Activated T-helper 1 cell treated with anti-CD3 and anti-CD28 coated beads, Interleukin-12 subunit alpha, Interleukin-12 subunit beta, Interleukin-2, Interleukin-4 antibody, amounts not matched to agents 30 ng/mL and 10 ng/mL and 1 ng/mL, durations not matched to agents 14 hours and 24 hours and 36 hours (primary cell): ENCODE measurements at regions of chr2 and their contacts with region 1.

Region 1: GRCh38 chr2:28392297-28393113 is at the start of gene FOSL2:
- DNase-seq: peak; percentile 94
- H3K4me3 Mint-ChIP-seq: peak within 1 kb of the TSS; percentile 87
- H3K27ac Mint-ChIP-seq: peak within 1 kb of the TSS; percentile 99
- H3K4me1 Mint-ChIP-seq: peaks cover 25% of the 10 kb centered on the region
- H3K27me3 Mint-ChIP-seq: no peaks in the 10 kb centered on the region
- total RNA-seq, gene FOSL2: 54.9 and 55.0 TPM in 2 replicates

Region 2: DNA sequence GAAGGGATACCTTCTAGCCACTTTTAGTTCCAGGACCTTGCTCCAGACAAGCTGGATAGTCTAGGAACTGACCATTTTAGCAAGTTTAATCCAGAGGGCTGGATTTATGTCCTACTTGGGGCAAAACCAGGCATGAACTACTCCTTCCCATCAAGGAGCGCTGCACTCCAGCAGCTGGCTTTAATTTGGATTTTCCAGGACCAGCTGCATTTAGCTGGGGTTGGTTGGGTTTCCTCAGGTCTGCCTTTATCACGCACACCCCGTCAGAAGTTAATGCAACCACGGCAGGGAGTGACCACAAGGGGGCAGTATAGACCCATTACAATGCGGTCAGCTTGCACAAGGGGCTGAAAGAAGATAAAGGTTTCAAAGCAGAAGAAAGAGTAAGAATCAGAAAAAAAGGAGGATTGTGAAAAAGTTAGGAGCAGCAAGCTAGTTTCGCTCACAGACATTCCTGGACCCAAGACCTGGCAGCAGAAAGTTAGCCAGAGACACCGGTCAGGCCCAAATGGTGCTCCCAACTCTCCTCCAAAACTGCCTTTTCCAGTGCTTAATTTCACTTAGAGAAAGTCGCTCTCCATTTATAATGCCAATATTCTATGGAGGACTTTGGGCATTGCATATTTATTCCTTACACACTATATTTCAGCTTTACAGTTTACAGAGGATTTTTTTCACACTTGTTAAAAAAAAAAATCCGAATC is 688.7 kb before region 1 on chr2:
- intact Hi-C with region 1: loop called (anchors 1 kb)
- DNase-seq: peak; percentile 74
- H3K4me3 Mint-ChIP-seq: no peak overlapping the region
- H3K27ac Mint-ChIP-seq: no peak overlapping the region
- H3K4me1 Mint-ChIP-seq: peaks cover 15% of the 10 kb centered on the region
- H3K27me3 Mint-ChIP-seq: no peaks in the 10 kb centered on the region

Region 3: DNA sequence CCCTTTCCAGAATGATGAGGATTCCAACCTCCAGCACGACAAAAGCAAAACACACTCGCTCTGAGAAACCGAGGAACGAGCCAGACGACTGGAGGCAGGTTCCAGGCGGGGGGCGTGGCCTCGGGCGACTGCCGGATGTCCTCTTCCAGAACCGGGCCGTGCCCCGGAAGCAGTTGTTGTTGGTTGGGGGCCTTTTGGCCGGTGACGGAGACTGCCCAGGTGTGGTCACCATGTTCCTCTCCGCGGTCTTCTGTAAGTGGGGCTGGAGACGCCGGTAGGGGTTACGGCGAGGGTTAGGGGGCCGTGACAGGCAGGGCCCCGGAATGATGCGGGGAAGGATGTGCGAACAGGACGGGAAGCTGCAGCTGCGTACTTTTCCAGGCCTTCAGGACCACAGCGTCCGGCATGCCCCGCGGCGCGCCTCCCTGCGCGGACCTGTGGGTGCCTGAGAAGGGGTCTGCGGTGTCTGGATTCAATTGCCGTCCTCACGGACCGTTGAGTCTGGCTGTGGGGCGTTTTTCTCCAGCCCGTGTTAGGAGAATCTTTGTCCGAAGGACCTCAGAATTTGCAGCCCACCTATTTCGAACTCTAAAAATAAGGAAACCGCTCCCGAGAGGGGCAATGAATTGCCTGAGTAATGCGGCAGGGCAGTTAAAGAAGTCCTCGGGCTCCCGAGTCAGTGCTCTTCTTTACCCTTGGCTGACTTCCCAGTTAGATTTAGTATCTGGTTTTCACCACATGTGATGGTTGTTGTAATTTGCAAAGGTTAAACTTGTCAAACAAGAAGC is 620.8 kb before region 1 on chr2 and contains the start of gene MRPL33:
- intact Hi-C with region 1: loop called (anchors 2 kb)
- DNase-seq: peak; percentile 86
- H3K4me3 Mint-ChIP-seq: peak within 1 kb of the TSS; percentile 99
- H3K27ac Mint-ChIP-seq: peak within 1 kb of the TSS; percentile 96
- H3K4me1 Mint-ChIP-seq: peaks cover 47% of the 10 kb centered on the region
- H3K27me3 Mint-ChIP-seq: no peaks in the 10 kb centered on the region
- total RNA-seq, gene MRPL33: 55.4 and 55.9 TPM in 2 replicates

Region 4: GRCh38 chr2:28155627-28156026 is 236.9 kb before region 1 on chr2:
- intact Hi-C with region 1: loop called (anchors 10 kb)
- DNase-seq: no peak
- H3K4me3 Mint-ChIP-seq: no peak overlapping the region
- H3K27ac Mint-ChIP-seq: no peak overlapping the region
- H3K4me1 Mint-ChIP-seq: no peaks in the 10 kb centered on the region
- H3K27me3 Mint-ChIP-seq: no peaks in the 10 kb centered on the region

Region 5: DNA sequence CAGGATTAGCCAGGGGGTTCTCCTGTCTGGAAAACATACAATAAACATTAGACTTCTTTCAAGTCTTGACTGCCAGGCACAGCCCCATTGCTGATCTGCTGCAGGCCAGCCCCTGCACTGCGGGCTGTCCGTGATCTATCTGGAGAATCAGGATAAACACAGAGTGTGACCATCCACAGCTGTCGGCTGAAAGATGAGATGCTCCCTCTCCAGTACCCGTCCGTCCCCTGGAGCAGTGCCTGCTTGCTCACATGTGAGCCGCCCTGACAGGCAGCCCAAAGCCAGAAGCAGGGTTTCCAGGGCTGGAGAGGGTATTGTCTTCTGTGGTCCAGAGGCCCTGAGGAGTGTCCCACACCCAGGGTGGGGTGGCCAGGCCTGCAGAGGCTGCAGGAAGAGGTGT is 45.9 kb before region 1 on chr2:
- intact Hi-C with region 1: no loop called
- DNase-seq: no peak
- H3K4me3 Mint-ChIP-seq: no peak overlapping the region
- H3K27ac Mint-ChIP-seq: no peak overlapping the region
- H3K4me1 Mint-ChIP-seq: peaks cover 21% of the 10 kb centered on the region
- H3K27me3 Mint-ChIP-seq: no peaks in the 10 kb centered on the region

Region 6: DNA sequence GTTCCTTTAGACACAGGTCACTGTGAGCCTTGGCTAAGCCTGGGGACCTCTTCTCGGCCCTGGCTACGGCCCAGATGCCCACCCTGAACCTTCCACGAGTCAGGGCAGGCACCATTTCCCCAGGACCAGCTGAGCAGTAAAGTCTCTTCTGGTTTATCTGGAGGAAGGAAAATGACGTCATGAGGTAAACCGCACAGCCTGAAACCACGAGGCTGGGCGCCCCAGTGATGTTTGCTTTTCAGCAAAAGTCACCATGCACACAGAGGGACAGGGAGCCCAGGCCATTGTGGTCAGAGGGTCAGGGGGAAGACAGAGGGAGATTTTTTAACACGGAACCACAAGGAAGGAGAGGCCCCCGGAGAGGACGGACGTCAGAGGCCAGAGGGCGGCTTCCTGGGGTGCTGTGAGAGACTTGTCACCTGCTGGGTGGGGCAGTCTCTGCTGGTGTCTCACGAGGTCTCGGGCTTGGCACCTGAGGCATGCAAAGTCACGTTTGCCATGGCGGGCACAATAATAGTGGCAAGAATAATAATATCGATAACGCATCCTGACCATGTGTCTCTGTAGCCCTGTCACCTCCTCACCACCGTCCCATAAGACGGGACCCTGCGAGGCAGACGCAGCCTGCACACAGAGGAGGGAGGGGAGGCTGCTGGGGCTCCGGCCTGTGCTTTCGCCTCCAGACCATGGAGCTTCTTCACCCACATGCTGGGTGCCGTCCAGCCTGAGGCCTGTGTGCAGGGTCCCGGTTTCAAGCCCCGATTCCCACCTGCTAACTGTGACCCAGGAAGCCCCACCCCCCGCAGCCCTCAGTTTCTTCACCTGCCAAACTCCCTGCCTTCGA is 33.1 kb before region 1 on chr2:
- intact Hi-C with region 1: loop called (anchors 1 kb)
- DNase-seq: peak; percentile 84
- H3K4me3 Mint-ChIP-seq: peak overlapping the region; percentile 61
- H3K27ac Mint-ChIP-seq: peak overlapping the region; percentile 96
- H3K4me1 Mint-ChIP-seq: peaks cover 44% of the 10 kb centered on the region
- H3K27me3 Mint-ChIP-seq: peaks cover 10% of the 10 kb centered on the region

Region 7: GRCh38 chr2:28403370-28403956 is 11.0 kb after region 1 on chr2:
- intact Hi-C with region 1: no loop called
- DNase-seq: no peak
- H3K4me3 Mint-ChIP-seq: no peak overlapping the region
- H3K27ac Mint-ChIP-seq: no peak overlapping the region
- H3K4me1 Mint-ChIP-seq: peaks cover 48% of the 10 kb centered on the region
- H3K27me3 Mint-ChIP-seq: no peaks in the 10 kb centered on the region

Region 8: DNA sequence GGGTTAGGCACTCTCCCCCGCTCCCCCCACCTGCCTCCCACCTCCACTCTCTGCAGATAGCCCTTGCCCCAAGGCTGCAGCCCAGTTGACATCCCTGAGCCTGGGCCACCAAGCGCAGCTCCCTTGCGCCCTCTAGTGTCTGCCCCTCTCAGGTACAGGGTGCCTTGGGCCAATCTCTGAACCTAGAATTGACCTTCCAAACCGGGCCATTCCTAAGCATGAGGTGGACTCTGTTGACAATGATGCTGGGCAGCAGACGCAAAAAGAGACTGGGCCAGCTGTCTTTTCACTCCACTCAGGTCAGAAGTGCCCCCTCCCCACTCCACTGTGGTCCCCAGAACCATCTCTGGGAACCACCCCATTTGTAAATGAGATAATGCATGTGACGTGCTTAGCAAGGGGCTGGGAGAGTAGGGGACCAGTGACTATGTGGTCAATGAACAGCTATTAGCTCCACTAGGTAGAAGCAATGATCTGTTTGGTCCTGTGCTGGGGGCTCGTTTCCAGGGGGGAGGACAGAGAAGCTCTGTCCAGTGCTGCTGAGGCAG is 60.1 kb after region 1 on chr2:
- intact Hi-C with region 1: loop called (anchors 1 kb)
- DNase-seq: peak; percentile 67
- H3K4me3 Mint-ChIP-seq: no peak overlapping the region
- H3K27ac Mint-ChIP-seq: no peak overlapping the region
- H3K4me1 Mint-ChIP-seq: peaks cover 40% of the 10 kb centered on the region
- H3K27me3 Mint-ChIP-seq: peaks cover 4% of the 10 kb centered on the region

Region 9: GRCh38 chr2:28495551-28496250 is 103.2 kb after region 1 on chr2 and contains the start of gene PLB1:
- intact Hi-C with region 1: no loop called
- DNase-seq: no peak
- H3K4me3 Mint-ChIP-seq: no peak within 1 kb of the TSS
- H3K27ac Mint-ChIP-seq: no peak within 1 kb of the TSS
- H3K4me1 Mint-ChIP-seq: no peaks in the 10 kb centered on the region
- H3K27me3 Mint-ChIP-seq: peaks cover 28% of the 10 kb centered on the region
- total RNA-seq, gene PLB1: 0.75 and 1.2 TPM in 2 replicates

Region 10: GRCh38 chr2:28894470-28895177 is 502.1 kb after region 1 on chr2 and contains the start of gene WDR43:
- intact Hi-C with region 1: loop called (anchors 2 kb)
- DNase-seq: peak; percentile 99
- H3K4me3 Mint-ChIP-seq: peak within 1 kb of the TSS; percentile 100
- H3K27ac Mint-ChIP-seq: peak within 1 kb of the TSS; percentile 96
- H3K4me1 Mint-ChIP-seq: peaks cover 40% of the 10 kb centered on the region
- H3K27me3 Mint-ChIP-seq: no peaks in the 10 kb centered on the region
- total RNA-seq, gene WDR43: 188 and 190 TPM in 2 replicates

Region 11: DNA sequence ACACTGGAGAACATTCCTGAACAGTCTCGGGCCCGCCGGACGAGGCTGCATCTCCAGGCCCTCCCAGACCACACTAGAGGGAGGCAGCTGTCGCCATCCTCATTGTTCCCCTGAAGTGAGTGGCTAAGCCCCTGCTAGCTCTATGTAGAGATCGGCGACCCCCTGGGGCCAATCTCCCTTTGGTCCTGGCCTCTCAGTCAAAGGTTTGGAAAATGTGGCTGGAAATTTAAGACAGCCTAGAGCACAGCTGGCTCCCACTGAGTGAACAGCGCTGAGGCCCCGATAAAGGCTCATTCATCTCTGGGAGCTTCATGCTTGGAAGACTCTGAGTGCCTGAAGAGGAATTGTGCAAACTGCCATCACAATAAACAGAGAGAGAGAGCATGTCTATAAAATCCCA is 1083.0 kb after region 1 on chr2:
- intact Hi-C with region 1: no loop called
- DNase-seq: no peak
- H3K4me3 Mint-ChIP-seq: no peak overlapping the region
- H3K27ac Mint-ChIP-seq: no peak overlapping the region
- H3K4me1 Mint-ChIP-seq: no peaks in the 10 kb centered on the region
- H3K27me3 Mint-ChIP-seq: peaks cover 10% of the 10 kb centered on the region